ENCODE measurements at regions of chr15 and their contacts with region 1.

Region 1: DNA sequence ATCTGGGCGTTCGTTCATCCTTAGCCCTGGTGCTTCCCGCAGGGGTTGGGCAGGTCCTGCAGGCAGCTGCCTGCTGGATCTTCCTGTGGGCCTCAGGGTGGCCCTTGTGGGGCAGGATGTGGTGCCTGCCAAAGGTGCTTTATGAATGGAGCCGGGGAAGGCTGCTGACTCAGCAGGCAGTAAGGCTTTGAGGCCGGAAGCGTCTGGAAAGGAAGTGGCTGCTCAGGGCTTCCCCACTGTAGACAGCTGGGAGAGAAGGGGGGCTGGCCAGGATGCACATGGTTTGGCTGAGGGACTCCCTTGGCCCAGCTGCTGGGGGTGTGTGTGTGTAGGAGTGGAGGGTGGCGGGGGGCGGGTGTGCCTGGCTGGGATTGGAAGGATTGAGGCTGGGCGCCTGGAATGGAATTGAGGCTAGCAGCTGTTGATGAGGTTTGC is 12.9 kb downstream of the CD276 start:
- H3K4me3 ChIP-seq: no peak overlapping the region
- H3K27ac ChIP-seq: peak overlapping the region; percentile 54
- H3K4me1 ChIP-seq: peaks cover 12% of the 10 kb centered on the region
- CTCF ChIP-seq: no peak

Region 2: GRCh38 chr15:72404841-72405240 is 1292.2 kb before region 1 on chr15:
- CTCF ChIA-PET with region 1: no interaction called
- POLR2A ChIA-PET with region 1: no interaction called
- H3K4me3 ChIP-seq: no peak overlapping the region
- H3K27ac ChIP-seq: no peak overlapping the region
- H3K4me1 ChIP-seq: peaks cover 2% of the 10 kb centered on the region; the same call in 1 of the 2 replicates
- CTCF ChIP-seq: no peak

Region 3: GRCh38 chr15:73305331-73306211 is 391.5 kb before region 1 on chr15:
- CTCF ChIA-PET with region 1: interaction called, 35 read pairs
- POLR2A ChIA-PET with region 1: interaction called, 3 read pairs
- H3K4me3 ChIP-seq: no peak overlapping the region
- H3K27ac ChIP-seq: no peak overlapping the region
- H3K4me1 ChIP-seq: no peaks in the 10 kb centered on the region
- CTCF ChIP-seq: peak; percentile 77

Region 4: GRCh38 chr15:73596174-73596573 is 100.9 kb before region 1 on chr15:
- CTCF ChIA-PET with region 1: interaction called, 14 read pairs
- POLR2A ChIA-PET with region 1: no interaction called
- H3K4me3 ChIP-seq: no peak overlapping the region
- H3K27ac ChIP-seq: no peak overlapping the region
- H3K4me1 ChIP-seq: peaks cover 64% of the 10 kb centered on the region
- CTCF ChIP-seq: no peak

Region 5: GRCh38 chr15:73712088-73712487 is 15.0 kb after region 1 on chr15:
- CTCF ChIA-PET with region 1: interaction called, 25 read pairs
- POLR2A ChIA-PET with region 1: interaction called, 4 read pairs
- H3K4me3 ChIP-seq: no peak overlapping the region
- H3K27ac ChIP-seq: no peak overlapping the region
- H3K4me1 ChIP-seq: no peaks in the 10 kb centered on the region
- CTCF ChIP-seq: 0 out of 2 replicates have a peak, but pooled peaks have one; percentile 10

Region 6: GRCh38 chr15:73727330-73727976 is 30.4 kb after region 1 on chr15:
- CTCF ChIA-PET with region 1: interaction called, 11 read pairs
- POLR2A ChIA-PET with region 1: no interaction called
- H3K4me3 ChIP-seq: no peak overlapping the region
- H3K27ac ChIP-seq: no peak overlapping the region
- H3K4me1 ChIP-seq: no peaks in the 10 kb centered on the region
- CTCF ChIP-seq: no peak